ENCODE measurements at regions of chr2 and their contacts with region 1.

Region 1: DNA sequence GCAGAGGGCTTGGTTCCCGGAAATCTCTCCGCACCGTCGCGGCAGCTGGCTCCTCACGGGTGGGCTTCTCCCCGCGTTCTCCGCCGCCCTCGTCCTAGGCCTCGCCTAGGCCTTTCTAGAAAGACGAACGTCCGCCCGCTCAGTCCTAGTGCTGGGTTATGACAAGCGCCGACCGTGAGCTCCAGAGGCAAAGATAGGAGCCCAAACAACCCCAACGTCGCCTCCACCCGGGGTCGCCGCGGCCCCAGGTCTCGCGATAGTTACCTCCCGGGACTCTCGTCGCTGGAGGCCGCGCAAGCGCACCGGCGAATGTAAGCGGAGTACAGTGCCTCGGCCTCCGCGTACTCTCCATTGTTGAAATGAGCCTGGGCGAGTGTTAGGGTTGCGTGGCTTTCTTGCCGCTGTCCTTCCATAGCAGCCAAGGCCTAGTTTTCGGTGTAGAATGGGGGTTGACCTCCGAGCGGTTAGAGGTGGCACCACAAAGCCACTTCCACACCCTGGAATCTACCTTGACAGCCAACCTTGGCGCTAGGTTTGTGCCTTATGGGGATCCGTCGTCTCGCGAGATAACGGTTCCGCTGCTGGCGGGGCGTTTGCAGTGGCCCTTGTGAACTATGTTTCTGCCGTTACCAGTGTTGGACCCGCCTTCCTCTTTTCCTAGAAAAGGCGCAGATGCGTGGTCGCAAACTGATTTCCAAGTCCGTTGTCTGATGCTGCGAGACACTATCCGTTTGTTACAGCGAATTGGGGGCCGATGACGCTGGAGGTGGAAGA is at the start of gene TTC32:
- DNase-seq: peak; percentile 94 to 97
- ATAC-seq: peak; percentile 90 to 94 (median 90)
- H3K4me3 ChIP-seq: peak within 1 kb of the TSS; percentile 86
- H3K4me3 Mint-ChIP-seq: peak within 1 kb of the TSS; percentile 95
- H3K27ac ChIP-seq: peak within 1 kb of the TSS; percentile 98
- H3K27ac Mint-ChIP-seq: peak within 1 kb of the TSS; percentile 94 to 97
- H3K4me1 ChIP-seq: peaks cover 11% of the 10 kb centered on the region
- H3K4me1 Mint-ChIP-seq: peaks cover 29 to 39% of the 10 kb centered on the region in 2 donors
- H3K27me3 ChIP-seq: no peaks in the 10 kb centered on the region
- H3K27me3 Mint-ChIP-seq: peaks cover 6 to 19% of the 10 kb centered on the region in 2 donors
- CTCF ChIP-seq: no peak
- total RNA-seq, gene TTC32: 30.4 to 45.3 (median 37.2) TPM

Region 2: GRCh38 chr2:18560031-18560796 is 1341.4 kb before region 1 on chr2 and contains the start of gene RDH14:
- intact Hi-C with region 1: loop called (anchors 1 kb)
- DNase-seq: peak; percentile 84 to 94
- ATAC-seq: peak; percentile 88 to 96 (median 89)
- H3K4me3 ChIP-seq: peak within 1 kb of the TSS; percentile 50
- H3K4me3 Mint-ChIP-seq: peak within 1 kb of the TSS; percentile 91
- H3K27ac ChIP-seq: peak within 1 kb of the TSS; percentile 79
- H3K27ac Mint-ChIP-seq: peak within 1 kb of the TSS; percentile 91 to 93
- H3K4me1 ChIP-seq: peaks cover 12% of the 10 kb centered on the region
- H3K4me1 Mint-ChIP-seq: peaks cover 30 to 34% of the 10 kb centered on the region in 2 donors
- H3K27me3 ChIP-seq: no peaks in the 10 kb centered on the region
- H3K27me3 Mint-ChIP-seq: no peaks in the 10 kb centered on the region
- CTCF ChIP-seq: no peak
- total RNA-seq, gene RDH14: 8.7 to 13.5 (median 12.5) TPM

Region 3: GRCh38 chr2:19362755-19363473 is 538.7 kb before region 1 on chr2:
- intact Hi-C with region 1: loop called (anchors 5 kb)
- DNase-seq: peak in 1 of 2 donors; percentile 72
- ATAC-seq: peak; percentile 44 to 48 (median 48)
- H3K4me3 ChIP-seq: peak overlapping the region; percentile 46
- H3K4me3 Mint-ChIP-seq: peak overlapping the region; percentile 98
- H3K27ac ChIP-seq: no peak overlapping the region
- H3K27ac Mint-ChIP-seq: peak overlapping the region; percentile 60 to 71
- H3K4me1 ChIP-seq: peaks cover 34% of the 10 kb centered on the region
- H3K4me1 Mint-ChIP-seq: peaks cover 26 to 35% of the 10 kb centered on the region in 2 donors
- H3K27me3 ChIP-seq: peaks cover 35% of the 10 kb centered on the region
- H3K27me3 Mint-ChIP-seq: peaks cover 19 to 28% of the 10 kb centered on the region in 2 donors
- CTCF ChIP-seq: peak; percentile 34

Region 4: GRCh38 chr2:19632403-19632991 is 269.1 kb before region 1 on chr2:
- intact Hi-C with region 1: no loop called
- DNase-seq: no peak
- ATAC-seq: no peak
- H3K4me3 ChIP-seq: no peak overlapping the region
- H3K4me3 Mint-ChIP-seq: no peak overlapping the region
- H3K27ac ChIP-seq: no peak overlapping the region
- H3K27ac Mint-ChIP-seq: no peak overlapping the region
- H3K4me1 ChIP-seq: no peaks in the 10 kb centered on the region
- H3K4me1 Mint-ChIP-seq: no peaks in the 10 kb centered on the region
- H3K27me3 ChIP-seq: no peaks in the 10 kb centered on the region
- H3K27me3 Mint-ChIP-seq: no peaks in the 10 kb centered on the region
- CTCF ChIP-seq: no peak

Region 5: DNA sequence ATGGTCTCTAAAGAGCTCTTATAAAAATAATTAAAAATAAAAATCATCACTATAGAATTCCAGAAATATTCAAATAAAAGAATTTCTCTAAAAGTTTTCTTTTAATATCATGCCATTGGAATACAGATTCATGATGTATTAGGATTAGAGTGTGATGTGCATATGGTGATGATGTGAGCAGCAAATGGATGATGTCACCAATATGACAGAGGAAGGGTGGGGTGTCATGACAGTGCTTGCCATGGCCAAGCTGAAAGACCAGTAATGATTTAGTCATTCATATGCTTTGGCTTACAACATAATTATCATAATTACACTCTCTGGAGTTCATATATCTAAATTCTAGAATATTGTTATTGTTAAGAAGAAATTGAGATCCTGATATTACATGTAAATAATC is 27.6 kb after region 1 on chr2:
- intact Hi-C with region 1: no loop called
- DNase-seq: no peak
- ATAC-seq: no peak
- H3K4me3 ChIP-seq: no peak overlapping the region
- H3K4me3 Mint-ChIP-seq: no peak overlapping the region
- H3K27ac ChIP-seq: no peak overlapping the region
- H3K27ac Mint-ChIP-seq: no peak overlapping the region
- H3K4me1 ChIP-seq: no peaks in the 10 kb centered on the region
- H3K4me1 Mint-ChIP-seq: no peaks in the 10 kb centered on the region
- H3K27me3 ChIP-seq: no peaks in the 10 kb centered on the region
- H3K27me3 Mint-ChIP-seq: no peaks in the 10 kb centered on the region
- CTCF ChIP-seq: no peak

Region 6: GRCh38 chr2:20051532-20052228 is 150.1 kb after region 1 on chr2 and contains the start of gene LAPTM4A:
- intact Hi-C with region 1: loop called (anchors 1 kb)
- DNase-seq: peak; percentile 94 to 100
- ATAC-seq: peak; percentile 88 to 97 (median 93)
- H3K4me3 ChIP-seq: peak within 1 kb of the TSS; percentile 90
- H3K4me3 Mint-ChIP-seq: no peak within 1 kb of the TSS
- H3K27ac ChIP-seq: peak within 1 kb of the TSS; percentile 100
- H3K27ac Mint-ChIP-seq: no peak within 1 kb of the TSS
- H3K4me1 ChIP-seq: peaks cover 14% of the 10 kb centered on the region
- H3K4me1 Mint-ChIP-seq: peaks cover 5 to 26% of the 10 kb centered on the region in 2 donors
- H3K27me3 ChIP-seq: peaks cover 12% of the 10 kb centered on the region
- H3K27me3 Mint-ChIP-seq: peaks cover 11 to 15% of the 10 kb centered on the region in 2 donors
- CTCF ChIP-seq: no peak
- total RNA-seq, gene LAPTM4A: 60.6 to 98.4 (median 75.0) TPM

Region 7: DNA sequence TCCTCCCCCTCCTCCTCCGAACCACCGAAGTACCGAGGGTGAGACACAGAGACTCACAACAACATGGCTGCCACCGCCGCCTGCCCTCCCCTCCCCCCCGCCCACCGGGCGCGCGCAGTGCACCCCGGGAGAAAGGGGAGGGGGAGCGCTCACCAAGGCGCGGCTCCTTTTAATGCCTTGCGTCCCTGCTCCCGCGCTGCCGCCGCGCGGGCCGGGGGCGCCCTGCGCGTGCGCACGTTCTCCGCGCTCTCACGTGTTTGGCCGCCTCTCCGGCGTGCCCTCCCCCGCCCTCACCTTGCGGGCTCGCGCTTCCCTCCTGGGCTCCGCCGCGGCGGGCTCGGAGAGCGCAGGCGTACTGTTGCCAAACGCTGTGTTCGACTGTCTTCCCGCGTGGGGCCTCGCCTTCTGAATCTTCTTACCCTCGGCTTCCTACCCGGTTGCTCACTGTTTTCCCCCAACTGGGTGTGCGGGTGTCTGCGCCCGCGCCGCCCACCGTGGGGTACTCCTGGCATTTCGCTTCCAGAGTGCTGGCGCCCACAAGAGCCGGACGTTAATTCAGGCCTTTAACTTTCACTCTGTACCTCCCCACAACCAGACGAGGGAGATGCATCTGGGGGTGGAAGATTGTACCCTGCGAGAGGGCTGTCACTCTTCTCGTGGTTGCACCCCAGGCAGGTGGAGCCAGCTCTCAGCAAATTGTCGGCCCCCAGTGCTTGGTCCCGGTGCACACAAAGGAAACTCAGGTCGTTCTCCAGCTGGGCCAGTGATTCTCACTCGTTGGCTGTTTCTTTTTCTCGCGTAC is 449.3 kb after region 1 on chr2 and contains the start of gene PUM2:
- intact Hi-C with region 1: loop called (anchors 5 kb)
- DNase-seq: peak; percentile 92 to 99
- ATAC-seq: peak; percentile 85 to 96 (median 87)
- H3K4me3 ChIP-seq: peak within 1 kb of the TSS; percentile 76
- H3K4me3 Mint-ChIP-seq: no peak within 1 kb of the TSS
- H3K27ac ChIP-seq: peak within 1 kb of the TSS; percentile 95
- H3K27ac Mint-ChIP-seq: no peak within 1 kb of the TSS
- H3K4me1 ChIP-seq: peaks cover 30% of the 10 kb centered on the region
- H3K4me1 Mint-ChIP-seq: peaks cover 32 to 37% of the 10 kb centered on the region in 2 donors
- H3K27me3 ChIP-seq: no peaks in the 10 kb centered on the region
- H3K27me3 Mint-ChIP-seq: no peaks in the 10 kb centered on the region
- CTCF ChIP-seq: no peak
- total RNA-seq, gene PUM2: 115 to 157 (median 130) TPM

Region 8: GRCh38 chr2:20578895-20579825 is 677.5 kb after region 1 on chr2:
- intact Hi-C with region 1: loop called (anchors 5 kb)
- DNase-seq: no peak
- ATAC-seq: no peak
- H3K4me3 ChIP-seq: no peak overlapping the region
- H3K4me3 Mint-ChIP-seq: no peak overlapping the region
- H3K27ac ChIP-seq: no peak overlapping the region
- H3K27ac Mint-ChIP-seq: no peak overlapping the region
- H3K4me1 ChIP-seq: peaks cover 20% of the 10 kb centered on the region
- H3K4me1 Mint-ChIP-seq: peaks cover 17 to 18% of the 10 kb centered on the region in 2 donors
- H3K27me3 ChIP-seq: no peaks in the 10 kb centered on the region
- H3K27me3 Mint-ChIP-seq: no peaks in the 10 kb centered on the region
- CTCF ChIP-seq: no peak